RWPE1 (cell line): ENCODE measurements at regions of chr3 and their contacts with region 1.

Region 1: GRCh38 chr3:129386984-129387383 is 41.5 kb downstream of the EFCAB12 start:
- DNase-seq: no peak
- H3K27ac ChIP-seq: no peak overlapping the region
- CTCF ChIP-seq: no peak

Region 2: DNA sequence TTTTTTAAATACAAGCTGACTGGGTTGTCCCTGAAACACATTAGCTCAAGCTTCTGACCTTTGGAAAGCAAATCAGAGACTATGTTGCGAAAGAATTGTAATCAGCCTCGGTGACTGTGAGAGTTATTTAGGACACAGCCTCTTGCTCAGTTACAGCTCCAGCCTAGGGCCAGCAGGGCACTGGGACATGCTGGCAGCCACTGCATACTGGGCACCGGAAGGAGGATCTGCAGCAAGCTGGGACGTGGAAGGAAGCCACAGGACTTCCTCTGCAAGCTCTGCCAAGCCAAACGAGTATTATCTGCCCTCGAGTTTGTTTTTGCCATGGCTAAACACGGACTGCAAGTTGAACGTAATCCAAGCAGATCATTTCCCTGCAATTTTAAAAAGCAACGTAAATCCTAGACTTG is 162.0 kb before region 1 on chr3:
- CTCF ChIA-PET with region 1: no interaction called
- POLR2A ChIA-PET with region 1: no interaction called
- DNase-seq: peak; percentile 45
- H3K27ac ChIP-seq: peak overlapping the region; percentile 89
- CTCF ChIP-seq: no peak

Region 3: GRCh38 chr3:129327510-129327909 is 59.5 kb before region 1 on chr3:
- CTCF ChIA-PET with region 1: no interaction called
- POLR2A ChIA-PET with region 1: interaction called, 10 read pairs
- DNase-seq: no peak
- H3K27ac ChIP-seq: no peak overlapping the region
- CTCF ChIP-seq: no peak